Activated CD4-positive, alpha-beta T cell treated with anti-CD3 and anti-CD28 coated beads for 36 hours (primary cell): ENCODE measurements at regions of chr1 and their contacts with region 1.

Region 1: DNA sequence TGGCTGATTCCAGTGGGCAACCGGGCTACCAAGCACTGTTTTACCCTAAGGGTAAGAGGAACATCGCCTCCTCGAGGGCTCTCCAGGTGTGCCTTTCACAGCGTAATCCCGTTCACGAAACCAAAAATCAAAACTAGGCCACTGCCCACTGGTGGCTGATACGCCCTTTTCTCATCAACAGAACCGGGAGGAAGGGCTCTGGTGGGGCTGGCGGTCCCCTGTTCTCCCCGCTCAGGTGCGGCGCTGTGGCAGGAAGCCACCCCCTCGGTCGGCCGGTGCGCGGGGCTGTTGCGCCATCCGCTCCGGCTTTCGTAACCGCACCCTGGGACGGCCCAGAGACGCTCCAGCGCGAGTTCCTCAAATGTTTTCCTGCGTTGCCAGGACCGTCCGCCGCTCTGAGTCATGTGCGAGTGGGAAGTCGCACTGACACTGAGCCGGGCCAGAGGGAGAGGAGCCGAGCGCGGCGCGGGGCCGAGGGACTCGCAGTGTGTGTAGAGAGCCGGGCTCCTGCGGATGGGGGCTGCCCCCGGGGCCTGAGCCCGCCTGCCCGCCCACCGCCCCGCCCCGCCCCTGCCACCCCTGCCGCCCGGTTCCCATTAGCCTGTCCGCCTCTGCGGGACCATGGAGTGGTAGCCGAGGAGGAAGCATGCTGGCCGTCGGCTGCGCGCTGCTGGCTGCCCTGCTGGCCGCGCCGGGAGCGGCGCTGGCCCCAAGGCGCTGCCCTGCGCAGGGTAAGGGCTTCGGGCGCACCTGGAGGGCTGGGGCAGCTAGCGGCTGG is at the start of gene IL6R:
- DNase-seq: peak; percentile 85
- ATAC-seq: peak; percentile 35
- H3K4me3 Mint-ChIP-seq: peak within 1 kb of the TSS; percentile 83
- H3K27ac Mint-ChIP-seq: peak within 1 kb of the TSS; percentile 95
- H3K4me1 Mint-ChIP-seq: peaks cover 78% of the 10 kb centered on the region
- H3K27me3 Mint-ChIP-seq: no peaks in the 10 kb centered on the region
- total RNA-seq, gene IL6R: 13.1 to 14.0 TPM

Region 2: DNA sequence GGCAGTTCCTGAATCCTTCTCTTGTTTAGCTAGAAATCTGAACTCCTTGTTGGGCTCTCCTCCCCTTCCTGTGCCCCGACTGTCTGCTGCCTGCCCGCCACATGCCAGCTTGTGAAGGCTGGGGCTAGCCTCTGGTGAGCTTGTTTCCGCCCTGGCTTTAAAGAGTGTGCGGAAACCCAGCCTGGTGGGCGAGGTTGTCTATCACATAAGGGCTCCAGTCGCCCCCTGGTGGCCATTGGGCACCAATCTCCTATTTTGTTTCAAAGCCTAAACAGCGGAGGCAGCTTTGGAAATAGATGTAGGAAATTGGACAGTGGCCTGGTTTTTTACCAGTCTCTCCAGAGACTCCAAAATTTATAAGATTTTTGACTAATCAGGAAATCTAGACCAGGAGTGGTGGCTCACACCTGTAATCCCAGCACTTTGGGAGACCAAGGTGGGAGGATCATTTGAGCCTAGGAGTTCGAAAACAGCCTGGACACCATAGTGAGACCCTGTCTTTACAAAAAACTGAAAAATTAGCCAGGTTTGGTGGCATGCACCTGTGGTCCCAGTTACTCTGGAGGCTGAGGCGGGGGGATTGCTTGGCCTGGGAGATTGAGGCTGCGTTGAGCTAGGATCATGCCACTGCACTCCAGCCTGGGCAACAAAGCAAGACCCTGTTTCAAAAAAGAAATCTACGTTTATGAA is 70.0 kb before region 1 on chr1:
- CTCF ChIA-PET with region 1: interaction called, 11 read pairs
- POLR2A ChIA-PET with region 1: no interaction called
- intact Hi-C with region 1: no loop called
- DNase-seq: peak; percentile 97
- ATAC-seq: peak; percentile 95
- H3K4me3 Mint-ChIP-seq: no peak overlapping the region
- H3K27ac Mint-ChIP-seq: peak overlapping the region; percentile 92
- H3K4me1 Mint-ChIP-seq: peaks cover 64% of the 10 kb centered on the region
- H3K27me3 Mint-ChIP-seq: no peaks in the 10 kb centered on the region

Region 3: DNA sequence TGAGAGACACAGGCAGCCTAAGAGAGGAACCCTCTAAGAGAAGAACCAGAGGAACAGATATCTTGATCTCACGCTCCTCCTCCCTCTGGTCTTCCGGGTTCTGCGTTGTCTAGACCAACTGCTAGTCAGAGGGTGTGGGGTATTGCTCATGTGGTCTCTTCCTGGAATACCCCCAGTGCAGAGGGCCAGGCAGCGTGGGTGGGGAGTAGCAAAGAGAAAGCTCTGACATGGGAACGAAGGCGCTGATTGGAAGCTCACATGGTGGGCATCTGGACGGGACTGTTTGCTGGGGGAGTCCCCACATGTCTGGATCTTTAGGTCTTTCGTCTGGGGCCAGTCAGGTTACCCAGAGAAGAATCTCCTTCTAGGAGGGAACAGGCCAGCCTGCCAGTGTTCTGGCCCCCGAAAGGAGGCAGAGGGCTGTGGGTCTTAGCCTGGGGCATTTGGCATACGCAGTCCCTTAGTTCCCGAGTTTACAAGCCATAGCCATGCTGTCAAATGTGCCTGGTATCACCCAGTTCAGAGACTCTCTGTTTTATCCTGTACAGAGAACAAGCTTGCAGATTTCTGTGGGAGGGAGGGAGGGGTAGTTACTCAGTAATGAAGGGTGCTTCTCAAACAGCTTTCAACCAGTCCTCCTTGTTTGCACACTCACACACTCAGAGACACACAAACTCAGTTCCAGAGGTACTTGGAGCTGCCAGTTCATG is 18.4 kb before region 1 on chr1:
- CTCF ChIA-PET with region 1: interaction called, 5 read pairs
- POLR2A ChIA-PET with region 1: interaction called, 4 read pairs
- intact Hi-C with region 1: loop called in 1 of 2 experiments (anchors 1 kb)
- DNase-seq: peak; percentile 87
- ATAC-seq: peak; percentile 93
- H3K4me3 Mint-ChIP-seq: peak overlapping the region; percentile 55
- H3K27ac Mint-ChIP-seq: peak overlapping the region; percentile 95
- H3K4me1 Mint-ChIP-seq: peaks cover 31% of the 10 kb centered on the region
- H3K27me3 Mint-ChIP-seq: no peaks in the 10 kb centered on the region

Region 4: GRCh38 chr1:154431586-154432373 is 26.6 kb after region 1 on chr1:
- CTCF ChIA-PET with region 1: interaction called, 9 read pairs
- POLR2A ChIA-PET with region 1: no interaction called
- intact Hi-C with region 1: loop called (anchors 1 kb)
- DNase-seq: peak; percentile 76
- ATAC-seq: peak; percentile 83
- H3K4me3 Mint-ChIP-seq: no peak overlapping the region
- H3K27ac Mint-ChIP-seq: peak overlapping the region; percentile 58
- H3K4me1 Mint-ChIP-seq: peaks cover 56% of the 10 kb centered on the region
- H3K27me3 Mint-ChIP-seq: no peaks in the 10 kb centered on the region

Region 5: GRCh38 chr1:154463512-154463990 is 58.4 kb after region 1 on chr1:
- CTCF ChIA-PET with region 1: interaction called, 6 read pairs
- POLR2A ChIA-PET with region 1: no interaction called
- intact Hi-C with region 1: loop called (anchors 1 to 2 kb)
- DNase-seq: peak; percentile 86
- ATAC-seq: peak; percentile 87
- H3K4me3 Mint-ChIP-seq: peak overlapping the region; percentile 34
- H3K27ac Mint-ChIP-seq: peak overlapping the region; percentile 76
- H3K4me1 Mint-ChIP-seq: peaks cover 83% of the 10 kb centered on the region
- H3K27me3 Mint-ChIP-seq: no peaks in the 10 kb centered on the region

Region 6: DNA sequence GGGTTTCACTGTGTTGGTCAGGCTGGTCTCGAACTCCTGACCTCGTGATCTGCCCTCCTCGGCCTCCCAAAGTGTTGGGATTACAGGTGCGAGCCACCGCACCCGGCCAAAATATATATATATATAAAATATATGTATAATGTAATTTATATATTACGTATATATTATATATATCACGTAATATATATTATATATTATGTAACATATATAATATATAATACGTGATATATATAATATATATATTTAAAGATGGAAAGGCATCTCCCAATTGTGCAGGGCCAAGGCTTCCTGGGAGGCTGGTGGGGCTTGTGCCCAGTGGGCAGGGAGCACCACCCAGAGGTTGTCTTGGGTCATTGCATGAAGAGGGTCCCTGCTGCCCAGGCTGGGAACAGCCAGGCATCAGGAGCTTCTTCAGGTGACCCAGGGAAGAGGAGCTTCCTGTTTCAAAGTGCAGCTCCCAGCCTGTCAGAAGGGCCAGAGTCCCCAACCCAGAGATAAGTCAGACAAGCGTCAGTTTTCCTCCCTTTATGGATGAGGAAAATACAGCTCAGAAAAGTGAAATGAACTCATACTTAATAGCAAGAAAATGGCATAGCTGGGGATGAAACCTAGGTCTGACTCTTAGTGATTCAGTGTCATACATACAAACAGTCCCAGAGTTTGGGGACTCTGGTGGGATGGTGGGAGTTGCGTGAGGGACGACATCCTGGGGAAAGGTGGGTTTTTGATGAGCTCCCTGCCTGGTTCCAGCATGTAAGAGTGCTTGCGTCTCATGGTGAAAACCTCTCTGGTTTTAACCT is 141.3 kb after region 1 on chr1:
- CTCF ChIA-PET with region 1: interaction called, 10 read pairs
- POLR2A ChIA-PET with region 1: no interaction called
- intact Hi-C with region 1: no loop called
- DNase-seq: peak; percentile 79
- ATAC-seq: peak; percentile 94
- H3K4me3 Mint-ChIP-seq: no peak overlapping the region
- H3K27ac Mint-ChIP-seq: no peak overlapping the region
- H3K4me1 Mint-ChIP-seq: peaks cover 9% of the 10 kb centered on the region
- H3K27me3 Mint-ChIP-seq: peaks cover 2% of the 10 kb centered on the region